ENCODE measurements at regions of chr2 and their contacts with region 1.

Region 1: GRCh38 chr2:13201924-13202323 is 485.2 kb downstream of the TRIB2 start:
- DNase-seq: no peak
- H3K4me3 ChIP-seq: no peak overlapping the region
- H3K27ac ChIP-seq: no peak overlapping the region
- H3K4me1 ChIP-seq: no peaks in the 10 kb centered on the region
- H3K27me3 ChIP-seq: no peaks in the 10 kb centered on the region
- CTCF ChIP-seq: peak; percentile 47; the same call in 1 of the 2 replicates

Region 2: GRCh38 chr2:13218205-13218604 is 16.3 kb after region 1 on chr2:
- CTCF ChIA-PET with region 1: no interaction called
- POLR2A ChIA-PET with region 1: no interaction called
- intact Hi-C with region 1: no loop called
- DNase-seq: no peak
- H3K4me3 ChIP-seq: no peak overlapping the region
- H3K27ac ChIP-seq: no peak overlapping the region
- H3K4me1 ChIP-seq: no peaks in the 10 kb centered on the region
- H3K27me3 ChIP-seq: no peaks in the 10 kb centered on the region
- CTCF ChIP-seq: no peak

Region 3: GRCh38 chr2:13353083-13353482 is 151.2 kb after region 1 on chr2:
- CTCF ChIA-PET with region 1: no interaction called
- POLR2A ChIA-PET with region 1: interaction called, 18 read pairs
- intact Hi-C with region 1: no loop called
- DNase-seq: no peak
- H3K4me3 ChIP-seq: no peak overlapping the region
- H3K27ac ChIP-seq: no peak overlapping the region
- H3K4me1 ChIP-seq: no peaks in the 10 kb centered on the region
- H3K27me3 ChIP-seq: no peaks in the 10 kb centered on the region
- CTCF ChIP-seq: no peak